ENCODE measurements at regions of chr10 and their contacts with region 1.

Region 1: DNA sequence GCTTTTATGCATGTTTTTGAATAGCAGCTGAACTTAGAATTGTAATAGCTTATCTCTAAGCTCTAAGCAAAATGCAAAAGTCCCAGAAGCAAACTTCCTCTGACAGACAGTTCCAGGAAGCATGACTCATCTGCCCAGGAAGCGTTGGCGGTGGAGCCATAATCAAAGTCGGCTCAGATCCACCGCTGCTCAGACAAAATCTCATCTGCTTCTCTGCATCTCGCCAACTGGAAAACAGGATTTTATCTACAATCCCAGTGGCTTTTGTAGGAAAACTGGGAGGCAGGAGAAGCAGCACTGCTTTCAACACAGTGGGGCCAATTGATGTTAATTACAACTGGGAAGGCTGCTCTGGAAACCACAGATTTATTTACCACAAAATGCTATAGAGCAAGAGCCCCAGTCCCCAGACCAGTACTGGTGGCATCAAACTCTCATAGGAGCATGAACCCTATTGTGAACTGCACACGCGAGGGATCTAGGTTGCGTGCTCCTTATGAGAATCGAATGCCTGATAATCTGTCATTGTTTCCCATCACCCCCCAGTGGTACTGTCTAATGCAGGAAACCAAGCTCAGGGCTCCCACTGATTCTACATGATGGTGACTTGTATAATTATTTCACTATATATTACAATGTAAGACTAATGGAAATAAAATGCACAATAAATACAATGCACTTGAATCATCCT is 99.9 kb downstream of the CUBN start:
- DNase-seq: peak in 1 of 2 donors; percentile 39
- ATAC-seq: peak; percentile 68 to 79
- H3K4me3 ChIP-seq: peak overlapping the region in 1 of 4 donors; percentile 17
- H3K27ac ChIP-seq: peak overlapping the region; percentile 11 to 38 (median 25)
- H3K4me1 ChIP-seq: peaks cover 8 to 12% of the 10 kb centered on the region in 2 donors
- H3K27me3 ChIP-seq: no peaks in the 10 kb centered on the region
- CTCF ChIP-seq: no peak
- POLR2A ChIP-seq: no peak

Region 2: DNA sequence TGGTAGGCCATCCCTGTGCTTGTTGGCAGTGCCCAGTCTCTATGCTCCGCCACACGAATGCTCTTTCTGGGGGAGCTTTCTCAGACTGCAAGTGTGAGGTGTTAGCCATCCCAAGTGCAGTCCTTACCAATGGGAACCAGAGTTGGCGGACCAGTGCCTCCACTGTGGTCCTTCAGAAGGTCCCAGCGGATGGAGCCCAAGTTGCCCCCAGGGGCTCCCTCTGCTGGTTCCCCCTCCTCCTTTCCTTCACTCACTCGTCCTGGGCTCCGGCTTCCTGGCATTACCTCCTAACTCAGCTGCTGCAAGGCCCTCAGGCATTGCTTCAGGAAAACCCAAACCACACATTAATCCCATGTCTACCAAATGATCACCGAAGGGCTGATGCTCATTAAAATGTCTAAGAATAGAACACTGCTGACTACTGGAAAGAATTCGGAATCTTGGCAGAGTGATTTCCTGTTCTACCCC is 39.9 kb before region 1 on chr10:
- in situ Hi-C with region 1: no loop called
- intact Hi-C with region 1: loop called (anchors 5 kb)
- DNase-seq: no peak
- ATAC-seq: no peak
- H3K4me3 ChIP-seq: no peak overlapping the region
- H3K27ac ChIP-seq: no peak overlapping the region
- H3K4me1 ChIP-seq: no peaks in the 10 kb centered on the region
- H3K27me3 ChIP-seq: peaks cover 0 to 3% (median 0%) of the 10 kb centered on the region in 3 donors
- CTCF ChIP-seq: no peak
- POLR2A ChIP-seq: no peak

Region 3: GRCh38 chr10:17113889-17114540 is 84.3 kb after region 1 on chr10:
- in situ Hi-C with region 1: no loop called
- intact Hi-C with region 1: no loop called
- DNase-seq: peak; percentile 23 to 47
- ATAC-seq: no peak
- H3K4me3 ChIP-seq: no peak overlapping the region
- H3K27ac ChIP-seq: no peak overlapping the region
- H3K4me1 ChIP-seq: no peaks in the 10 kb centered on the region
- H3K27me3 ChIP-seq: no peaks in the 10 kb centered on the region
- CTCF ChIP-seq: no peak
- POLR2A ChIP-seq: no peak

Region 4: GRCh38 chr10:17512341-17513001 is 482.7 kb after region 1 on chr10:
- in situ Hi-C with region 1: no loop called
- intact Hi-C with region 1: no loop called
- DNase-seq: no peak
- ATAC-seq: no peak
- H3K4me3 ChIP-seq: no peak overlapping the region
- H3K27ac ChIP-seq: peak overlapping the region in 1 of 4 donors; percentile 22
- H3K4me1 ChIP-seq: no peaks in the 10 kb centered on the region
- H3K27me3 ChIP-seq: no peaks in the 10 kb centered on the region
- CTCF ChIP-seq: no peak
- POLR2A ChIP-seq: no peak

Measured in gastrocnemius medialis (tissue), 4 donors.